ENCODE measurements at regions of chr15 and their contacts with region 1.

Region 1: DNA sequence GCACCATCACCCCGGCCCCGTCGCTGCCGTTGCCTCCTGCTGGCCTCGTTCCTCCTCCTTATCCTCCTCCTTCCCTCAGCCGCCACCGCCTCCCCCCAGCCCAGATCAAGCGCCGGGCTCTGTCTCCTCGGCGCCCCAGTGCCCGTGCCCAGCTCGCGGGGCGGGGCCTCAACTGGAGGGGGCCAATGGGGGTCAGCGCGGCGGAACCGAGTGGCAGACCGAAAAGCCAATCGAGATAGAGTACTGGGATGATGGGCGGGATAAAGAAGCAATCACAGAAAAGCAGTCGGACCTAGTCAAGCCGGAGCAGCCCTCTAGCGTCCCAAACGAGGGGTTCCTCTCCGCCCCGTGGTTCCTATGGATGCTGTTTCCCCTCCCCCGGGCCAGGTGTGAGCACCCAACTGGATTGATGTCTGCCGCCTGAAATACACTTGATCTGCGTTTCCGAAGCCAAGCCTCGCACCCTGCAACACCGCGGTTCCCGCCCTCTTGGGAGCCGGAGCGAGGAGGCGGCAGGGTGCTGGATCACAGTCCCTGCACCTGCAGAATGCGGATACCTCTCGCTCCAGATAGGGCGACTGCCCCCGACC is at the start of gene FRMD5:
- DNase-seq: peak; percentile 93
- H3K4me3 Mint-ChIP-seq: peak within 1 kb of the TSS; percentile 78
- H3K27ac Mint-ChIP-seq: peak within 1 kb of the TSS; percentile 39
- H3K4me1 Mint-ChIP-seq: peaks cover 14% of the 10 kb centered on the region
- H3K27me3 Mint-ChIP-seq: no peaks in the 10 kb centered on the region
- CTCF ChIP-seq: no peak
- total RNA-seq, gene FRMD5: 7.0 and 10.9 TPM in 2 replicates

Region 2: GRCh38 chr15:42575188-42576039 is 1619.8 kb before region 1 on chr15 and contains the start of gene STARD9:
- CTCF ChIA-PET with region 1: no interaction called
- intact Hi-C with region 1: no loop called
- DNase-seq: peak; percentile 93
- H3K4me3 Mint-ChIP-seq: peak within 1 kb of the TSS; percentile 76
- H3K27ac Mint-ChIP-seq: no peak within 1 kb of the TSS
- H3K4me1 Mint-ChIP-seq: no peaks in the 10 kb centered on the region
- H3K27me3 Mint-ChIP-seq: peaks cover 37% of the 10 kb centered on the region
- CTCF ChIP-seq: no peak
- total RNA-seq, gene STARD9: 0.59 and 0.92 TPM in 2 replicates

Region 3: GRCh38 chr15:44102675-44103254 is 92.5 kb before region 1 on chr15:
- CTCF ChIA-PET with region 1: no interaction called
- intact Hi-C with region 1: loop called (anchors 10 kb)
- DNase-seq: peak; percentile 44
- H3K4me3 Mint-ChIP-seq: peak overlapping the region; percentile 58
- H3K27ac Mint-ChIP-seq: peak overlapping the region; percentile 90
- H3K4me1 Mint-ChIP-seq: peaks cover 37% of the 10 kb centered on the region
- H3K27me3 Mint-ChIP-seq: no peaks in the 10 kb centered on the region
- CTCF ChIP-seq: no peak

Region 4: GRCh38 chr15:44157685-44158099 is 37.6 kb before region 1 on chr15:
- CTCF ChIA-PET with region 1: no interaction called
- intact Hi-C with region 1: loop called (anchors 1 kb)
- DNase-seq: peak; percentile 5
- H3K4me3 Mint-ChIP-seq: no peak overlapping the region
- H3K27ac Mint-ChIP-seq: peak overlapping the region; percentile 50
- H3K4me1 Mint-ChIP-seq: peaks cover 18% of the 10 kb centered on the region
- H3K27me3 Mint-ChIP-seq: no peaks in the 10 kb centered on the region
- CTCF ChIP-seq: no peak

Region 5: DNA sequence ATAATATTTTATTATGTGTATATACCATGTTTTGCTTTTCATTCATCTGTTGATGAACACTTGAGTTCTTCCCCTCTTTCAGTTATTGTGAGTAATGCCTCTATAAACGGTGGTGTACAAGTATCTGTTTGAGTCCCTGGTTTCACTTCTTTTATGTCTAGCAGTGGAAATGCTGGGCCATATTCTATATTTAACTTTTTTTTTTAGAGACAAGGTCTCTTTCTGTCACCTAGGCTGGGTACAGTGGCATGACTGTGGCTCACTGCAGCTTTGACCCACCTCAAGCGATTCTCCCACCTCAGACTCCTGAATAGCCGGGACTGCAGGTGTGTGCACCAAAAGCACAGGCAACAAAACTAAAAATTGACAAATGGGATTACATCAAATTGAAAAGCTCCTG is 113.2 kb after region 1 on chr15:
- CTCF ChIA-PET with region 1: no interaction called
- intact Hi-C with region 1: no loop called
- DNase-seq: no peak
- H3K4me3 Mint-ChIP-seq: no peak overlapping the region
- H3K27ac Mint-ChIP-seq: no peak overlapping the region
- H3K4me1 Mint-ChIP-seq: no peaks in the 10 kb centered on the region
- H3K27me3 Mint-ChIP-seq: no peaks in the 10 kb centered on the region
- CTCF ChIP-seq: no peak